HCT116 (cell line): ENCODE measurements at regions of chr12 and their contacts with region 1.

Region 1: GRCh38 chr12:37672655-37673260 is 643.8 kb upstream of the ALG10B start:
- DNase-seq: no peak
- ATAC-seq: no peak
- H3K4me3 ChIP-seq: no peak overlapping the region
- H3K27ac ChIP-seq: no peak overlapping the region
- H3K4me1 ChIP-seq: no peaks in the 10 kb centered on the region
- H3K27me3 ChIP-seq: no peaks in the 10 kb centered on the region
- CTCF ChIP-seq: peak in 2 of 3 experiments; percentile 14 to 58; a peak in 2 of 6 replicates
- POLR2A ChIP-seq: no peak
- RAD21 ChIP-seq: peak; percentile 44

Region 2: GRCh38 chr12:37733856-37734255 is 61.1 kb after region 1 on chr12:
- CTCF ChIA-PET with region 1: no interaction called
- POLR2A ChIA-PET with region 1: no interaction called
- RAD21 ChIA-PET with region 1: no interaction called
- intact Hi-C with region 1: no loop called
- DNase-seq: no peak
- ATAC-seq: no peak
- H3K4me3 ChIP-seq: no peak overlapping the region
- H3K27ac ChIP-seq: no peak overlapping the region
- H3K4me1 ChIP-seq: no peaks in the 10 kb centered on the region
- H3K27me3 ChIP-seq: no peaks in the 10 kb centered on the region
- CTCF ChIP-seq: no peak
- POLR2A ChIP-seq: no peak
- RAD21 ChIP-seq: no peak

Region 3: GRCh38 chr12:38138225-38139221 is 465.8 kb after region 1 on chr12:
- CTCF ChIA-PET with region 1: no interaction called
- POLR2A ChIA-PET with region 1: no interaction called
- RAD21 ChIA-PET with region 1: no interaction called
- intact Hi-C with region 1: loop called (anchors 5 kb)
- DNase-seq: peak; percentile 61
- ATAC-seq: peak; percentile 91
- H3K4me3 ChIP-seq: peak overlapping the region; percentile 45 to 63
- H3K27ac ChIP-seq: peak overlapping the region; percentile 26; the same call in 1 of the 2 replicates
- H3K4me1 ChIP-seq: peaks cover 0 to 5% of the 10 kb centered on the region in 2 experiments; a peak in 1 of 4 replicates
- H3K27me3 ChIP-seq: no peaks in the 10 kb centered on the region
- CTCF ChIP-seq: peak; percentile 83 to 97 (median 85)
- POLR2A ChIP-seq: no peak
- RAD21 ChIP-seq: peak; percentile 90

Region 4: GRCh38 chr12:38316391-38317129 is 643.8 kb after region 1 on chr12 and contains the start of gene ALG10B:
- CTCF ChIA-PET with region 1: no interaction called
- POLR2A ChIA-PET with region 1: no interaction called
- RAD21 ChIA-PET with region 1: no interaction called
- intact Hi-C with region 1: loop called (anchors 2 kb)
- DNase-seq: peak; percentile 93
- ATAC-seq: peak; percentile 100
- H3K4me3 ChIP-seq: peak within 1 kb of the TSS; percentile 77 to 89
- H3K27ac ChIP-seq: peak within 1 kb of the TSS; percentile 70
- H3K4me1 ChIP-seq: no peaks in the 10 kb centered on the region; a peak in 1 of 4 replicates
- H3K27me3 ChIP-seq: no peaks in the 10 kb centered on the region
- CTCF ChIP-seq: peak; percentile 45 to 66 (median 63)
- POLR2A ChIP-seq: no peak
- RAD21 ChIP-seq: peak; percentile 87
- total RNA-seq, gene ALG10B: 9.0 TPM